ENCODE measurements at regions of chr3 and their contacts with region 1.

Region 1: DNA sequence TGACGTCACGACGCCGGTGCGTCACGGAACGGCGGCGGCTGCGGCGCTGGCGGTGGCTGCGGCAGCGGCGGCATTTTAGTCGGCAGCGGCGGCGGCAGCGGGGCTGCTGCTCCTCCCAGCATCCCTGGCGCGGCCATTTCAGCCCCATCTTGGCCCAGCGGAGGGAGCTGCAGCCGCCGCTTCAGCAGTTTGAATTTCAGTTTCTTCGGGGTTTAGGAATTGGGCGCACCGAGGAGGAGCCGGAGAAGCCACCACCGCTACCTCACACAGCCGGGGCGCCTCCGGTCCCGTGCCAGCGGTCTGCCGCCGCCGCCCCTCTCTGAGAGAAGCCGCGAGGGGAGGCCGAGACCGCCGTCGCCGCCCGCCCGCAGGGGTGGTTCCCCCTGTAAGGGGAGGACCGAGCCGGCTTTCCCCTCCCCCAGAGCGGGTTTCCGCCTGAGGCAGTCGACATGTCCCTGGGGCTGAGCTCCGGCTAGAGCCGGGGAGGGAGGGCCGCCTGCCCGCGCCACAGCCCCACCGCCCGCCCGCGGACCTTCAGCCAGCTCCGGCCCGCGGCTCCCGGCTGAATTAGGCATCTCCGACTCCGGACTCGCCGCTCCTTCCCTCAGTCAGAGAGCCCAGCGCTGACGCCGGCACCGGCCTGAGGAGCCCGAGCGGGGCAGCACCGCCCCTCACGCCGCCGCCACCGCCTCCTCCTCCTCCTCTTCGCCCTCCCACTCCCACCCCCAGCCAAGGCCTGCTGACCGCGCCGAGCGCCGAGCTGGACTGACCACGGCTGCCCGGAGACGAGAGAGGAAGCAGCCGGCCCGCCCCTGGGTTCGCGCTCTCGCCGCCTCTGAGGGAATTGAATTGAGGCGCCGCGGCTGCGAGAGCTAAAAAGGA is at the start of gene TSC22D2:
- DNase-seq: peak; percentile 95
- H3K4me3 ChIP-seq: peak within 1 kb of the TSS; percentile 58 to 74
- H3K27ac ChIP-seq: peak within 1 kb of the TSS; percentile 99 to 100
- H3K4me1 ChIP-seq: no peaks in the 10 kb centered on the region
- H3K27me3 ChIP-seq: no peaks in the 10 kb centered on the region
- CTCF ChIP-seq: peak in 2 of 4 experiments; percentile 38 to 44
- POLR2A ChIP-seq: peak; percentile 99
- total RNA-seq, gene TSC22D2: 9.6 to 29.2 TPM

Region 2: GRCh38 chr3:149969940-149970715 is 438.3 kb before region 1 on chr3:
- intact Hi-C with region 1: loop called (anchors 2 kb)
- DNase-seq: peak; percentile 85
- H3K4me3 ChIP-seq: peak overlapping the region; percentile 92 to 94
- H3K27ac ChIP-seq: peak overlapping the region; percentile 91 to 94
- H3K4me1 ChIP-seq: peaks cover 4% of the 10 kb centered on the region
- H3K27me3 ChIP-seq: no peaks in the 10 kb centered on the region
- CTCF ChIP-seq: no peak
- POLR2A ChIP-seq: no peak

Region 3: GRCh38 chr3:150371741-150372254 is 36.7 kb before region 1 on chr3:
- intact Hi-C with region 1: loop called (anchors 2 kb)
- DNase-seq: peak; percentile 43
- H3K4me3 ChIP-seq: no peak overlapping the region
- H3K27ac ChIP-seq: peak overlapping the region; percentile 41 to 53
- H3K4me1 ChIP-seq: no peaks in the 10 kb centered on the region
- H3K27me3 ChIP-seq: no peaks in the 10 kb centered on the region
- CTCF ChIP-seq: no peak
- POLR2A ChIP-seq: no peak

Region 4: GRCh38 chr3:150495563-150496168 is 87.2 kb after region 1 on chr3:
- intact Hi-C with region 1: loop called (anchors 2 kb)
- DNase-seq: no peak
- H3K4me3 ChIP-seq: no peak overlapping the region
- H3K27ac ChIP-seq: no peak overlapping the region
- H3K4me1 ChIP-seq: no peaks in the 10 kb centered on the region
- H3K27me3 ChIP-seq: no peaks in the 10 kb centered on the region
- CTCF ChIP-seq: peak; percentile 37 to 93 (median 88)
- POLR2A ChIP-seq: no peak

Region 5: DNA sequence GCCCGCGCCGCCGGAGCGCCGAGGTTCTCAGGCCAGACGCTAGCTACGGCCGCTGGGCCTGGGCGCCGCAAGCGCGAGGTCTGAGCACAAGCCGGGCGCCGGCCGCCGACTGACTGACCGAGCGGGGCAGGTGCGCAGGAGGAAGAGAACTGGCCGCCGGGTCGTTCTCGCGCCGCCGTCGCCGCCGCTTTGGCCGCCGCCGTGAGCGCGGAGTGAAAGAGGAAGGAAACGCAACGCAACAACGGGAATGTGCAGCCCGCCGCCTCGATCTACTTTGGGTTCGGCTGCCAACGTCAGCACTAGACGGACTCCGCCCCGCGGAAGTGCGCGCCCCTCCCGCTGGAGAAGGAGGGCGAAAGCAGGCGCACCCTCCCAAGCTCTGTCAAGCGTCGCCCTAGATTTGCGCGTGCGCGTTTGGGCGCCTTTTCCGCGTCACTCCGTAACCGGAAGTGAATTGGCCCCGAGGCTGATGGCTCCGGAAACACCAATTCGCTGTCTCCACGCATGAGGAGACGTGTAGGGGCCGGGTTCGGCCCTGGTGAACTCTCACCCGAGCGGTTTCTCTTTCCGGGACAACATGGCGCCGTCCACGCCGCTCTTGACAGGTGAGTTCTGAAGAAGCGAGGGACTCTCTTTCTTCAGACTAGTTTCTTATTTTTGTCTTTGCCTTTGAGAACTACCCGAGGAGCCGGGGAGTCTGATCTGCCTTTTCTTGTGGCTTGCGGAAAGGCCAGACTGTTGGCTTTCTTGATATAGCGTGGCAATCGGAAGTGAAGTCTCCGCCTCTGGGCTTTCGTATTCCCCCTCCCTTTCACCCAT is 138.0 kb after region 1 on chr3 and contains the starts of genes EIF2A and SERP1:
- intact Hi-C with region 1: loop called (anchors 2 kb)
- DNase-seq: peak; percentile 98
- H3K4me3 ChIP-seq: peak within 1 kb of the TSS; percentile 84 to 91
- H3K27ac ChIP-seq: peak within 1 kb of the TSS; percentile 95 to 98
- H3K4me1 ChIP-seq: peaks cover 4% of the 10 kb centered on the region
- H3K27me3 ChIP-seq: no peaks in the 10 kb centered on the region
- CTCF ChIP-seq: peak in 2 of 4 experiments; percentile 17 to 25
- POLR2A ChIP-seq: peak; percentile 99
- total RNA-seq, gene EIF2A: 71.9 to 141 TPM
- total RNA-seq, gene SERP1: 304 to 473 TPM

Region 6: GRCh38 chr3:150603153-150603979 is 194.9 kb after region 1 on chr3 and contains the start of gene SELENOT:
- intact Hi-C with region 1: loop called (anchors 5 kb)
- DNase-seq: peak; percentile 93
- H3K4me3 ChIP-seq: peak within 1 kb of the TSS; percentile 60 to 84
- H3K27ac ChIP-seq: peak within 1 kb of the TSS; percentile 95 to 96
- H3K4me1 ChIP-seq: no peaks in the 10 kb centered on the region
- H3K27me3 ChIP-seq: no peaks in the 10 kb centered on the region
- CTCF ChIP-seq: peak in 2 of 4 experiments; percentile 26 to 53
- POLR2A ChIP-seq: peak; percentile 97
- total RNA-seq, gene SELENOT: 123 to 126 TPM

Region 7: DNA sequence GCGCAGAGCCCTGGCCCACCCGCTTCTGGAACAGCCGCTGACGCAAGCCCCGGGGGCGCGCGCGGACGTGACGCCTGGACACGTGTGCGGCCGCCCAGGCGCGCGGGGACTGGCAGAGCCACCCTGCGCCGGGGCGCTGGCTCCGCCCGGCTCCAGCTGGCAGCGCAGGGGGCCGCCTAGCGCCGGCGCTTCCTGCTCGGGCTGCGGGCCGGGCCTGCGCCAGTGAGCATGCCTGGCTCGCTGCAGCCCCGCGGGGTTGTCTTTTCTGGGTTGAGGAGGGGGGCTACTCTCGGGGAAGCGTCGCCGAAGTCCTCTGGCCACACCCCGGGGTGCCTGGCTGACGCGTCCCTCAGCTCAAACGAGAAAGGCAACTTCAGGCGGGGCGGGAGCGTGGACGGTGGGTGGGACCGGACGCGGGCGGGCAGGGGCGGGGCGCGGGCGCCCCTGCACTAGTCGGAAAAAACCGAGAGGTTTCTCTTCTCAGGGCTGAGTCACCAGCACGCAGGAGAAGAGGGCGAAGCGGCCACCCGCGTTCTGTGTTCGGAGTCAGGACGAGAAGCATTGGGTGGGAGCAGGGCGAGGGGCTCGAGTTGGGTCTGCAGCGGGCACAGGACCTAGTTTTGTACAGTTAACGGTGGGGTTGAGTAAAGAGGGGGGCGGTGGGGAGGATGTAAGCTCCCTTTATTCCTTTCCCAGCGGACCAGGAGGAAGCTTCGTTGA is 354.8 kb after region 1 on chr3 and contains the start of gene SIAH2:
- intact Hi-C with region 1: loop called (anchors 5 kb)
- DNase-seq: peak; percentile 94
- H3K4me3 ChIP-seq: peak within 1 kb of the TSS; percentile 74 to 98
- H3K27ac ChIP-seq: peak within 1 kb of the TSS; percentile 98 to 100
- H3K4me1 ChIP-seq: peaks cover 4% of the 10 kb centered on the region
- H3K27me3 ChIP-seq: no peaks in the 10 kb centered on the region
- CTCF ChIP-seq: peak in 2 of 4 experiments; percentile 36 to 46
- POLR2A ChIP-seq: peak; percentile 72
- total RNA-seq, gene SIAH2: 47.4 to 48.9 TPM

Measured in prostate gland (tissue), 2 donors.